ENCODE measurements at regions of chr20 and their contacts with region 1.

Region 1: DNA sequence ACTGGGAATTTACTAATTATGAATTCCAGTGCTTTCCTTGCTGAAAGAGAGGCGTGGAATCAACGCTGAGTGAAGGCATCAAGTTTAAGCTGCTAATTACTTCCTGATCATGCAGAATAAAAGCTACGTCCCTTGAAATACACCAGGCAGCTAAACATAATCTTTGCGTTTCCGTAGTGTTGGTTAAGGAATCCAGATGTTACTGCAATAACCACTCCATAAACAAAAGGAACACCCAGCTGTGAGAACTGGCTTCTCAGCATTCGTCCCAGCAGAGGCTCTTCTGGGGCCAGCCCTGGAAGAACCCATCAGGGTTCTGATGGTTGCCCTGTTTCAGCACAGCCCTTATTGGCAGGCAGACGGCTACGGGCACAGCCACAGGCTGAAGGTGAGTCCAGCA is 111.4 kb downstream of the CDH26 start:
- DNase-seq: no peak
- ATAC-seq: no peak
- H3K4me3 ChIP-seq: no peak overlapping the region
- H3K27ac ChIP-seq: no peak overlapping the region
- H3K4me1 ChIP-seq: no peaks in the 10 kb centered on the region
- H3K27me3 ChIP-seq: no peaks in the 10 kb centered on the region
- CTCF ChIP-seq: no peak
- POLR2A ChIP-seq: no peak

Region 2: DNA sequence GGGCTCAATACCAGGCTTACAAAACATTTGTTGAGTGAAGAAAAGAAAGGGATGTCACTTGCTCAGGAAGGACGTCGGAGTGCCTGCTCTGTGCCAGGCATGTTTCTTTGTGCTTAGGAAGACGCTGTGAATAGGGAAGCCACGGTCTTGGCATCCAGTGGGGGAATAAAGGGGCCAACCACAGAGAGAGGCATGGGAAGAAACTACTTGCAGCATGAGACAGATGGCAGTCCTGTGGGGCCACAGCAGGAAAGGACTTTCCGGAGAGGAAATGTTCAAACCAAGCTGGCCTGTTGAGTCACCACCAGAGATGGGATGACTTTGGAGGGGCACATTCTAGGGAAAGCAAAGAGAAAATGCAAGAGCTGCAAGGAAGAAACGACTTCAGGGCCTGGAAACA is 61.7 kb after region 1 on chr20:
- intact Hi-C with region 1: loop called in 1 of 10 experiments (anchors 5 kb)
- DNase-seq: no peak
- ATAC-seq: peak in 2 of 4 donors; percentile 49 to 52
- H3K4me3 ChIP-seq: no peak overlapping the region
- H3K27ac ChIP-seq: no peak overlapping the region
- H3K4me1 ChIP-seq: peaks cover 0 to 23% (median 0%) of the 10 kb centered on the region in 12 donors
- H3K27me3 ChIP-seq: peaks cover 0 to 3% (median 0%) of the 10 kb centered on the region in 9 donors
- CTCF ChIP-seq: no peak
- POLR2A ChIP-seq: no peak